GM12878 (cell line): ENCODE measurements at regions of chr7 and their contacts with region 1.

Region 1: GRCh38 chr7:149028346-149029109 is at the start of gene PDIA4:
- DNase-seq: peak; percentile 96
- ATAC-seq: peak; percentile 94
- H3K4me3 ChIP-seq: peak within 1 kb of the TSS; percentile 79
- H3K27ac ChIP-seq: peak within 1 kb of the TSS; percentile 84
- H3K4me1 ChIP-seq: no peaks in the 10 kb centered on the region
- H3K27me3 ChIP-seq: no peaks in the 10 kb centered on the region
- CTCF ChIP-seq: peak in 2 of 3 experiments; percentile 11 to 14; a peak in 2 of 6 replicates
- EP300 ChIP-seq: no peak
- POLR2A ChIP-seq: peak; percentile 86
- RAD21 ChIP-seq: no peak
- polyA plus RNA-seq, gene PDIA4: 7.1 to 13.4 TPM

Region 2: DNA sequence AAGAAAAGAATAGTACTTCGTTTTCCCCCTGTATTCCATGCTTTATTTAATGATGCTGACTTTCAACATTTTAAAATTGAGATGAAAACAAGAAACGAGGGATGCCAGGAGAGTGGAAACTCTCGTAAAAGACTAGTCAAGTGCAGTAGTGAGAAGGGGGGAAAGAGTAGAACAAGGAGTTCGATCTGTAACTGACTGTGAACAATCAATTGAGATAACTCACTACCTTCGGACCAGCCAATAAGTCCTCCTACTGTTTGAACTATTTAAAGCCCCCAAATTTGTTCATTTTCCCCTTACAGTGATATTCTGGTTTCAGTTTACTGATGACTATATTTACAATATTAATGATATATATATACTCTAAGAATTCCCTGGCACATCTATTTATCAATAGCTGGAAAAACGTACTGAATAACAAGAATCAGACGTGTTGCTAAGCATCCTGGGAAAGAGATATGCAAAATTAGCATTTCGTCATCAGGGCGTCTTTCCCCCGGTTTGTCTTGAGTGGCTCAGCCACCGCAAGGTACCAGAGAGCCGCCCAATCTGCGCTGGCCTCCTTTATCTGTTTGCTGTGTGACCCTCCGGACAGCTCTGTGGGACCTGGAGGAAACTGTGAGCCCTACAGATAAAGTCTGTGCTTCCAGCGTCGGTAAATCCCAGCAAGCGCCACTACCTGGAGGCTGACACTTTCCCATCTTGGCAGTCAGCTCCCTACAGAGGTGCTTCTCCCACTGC is 41.3 kb before region 1 on chr7:
- CTCF ChIA-PET with region 1: interaction called, 3 read pairs
- POLR2A ChIA-PET with region 1: interaction called, 12 read pairs
- RAD21 ChIA-PET with region 1: interaction called, 4 read pairs
- SMC1A ChIA-PET with region 1: no interaction called
- in situ Hi-C with region 1: no loop called
- intact Hi-C with region 1: no loop called
- DNase-seq: peak; percentile 78
- ATAC-seq: peak; percentile 96
- H3K4me3 ChIP-seq: peak overlapping the region; percentile 92
- H3K27ac ChIP-seq: peak overlapping the region; percentile 38
- H3K4me1 ChIP-seq: peaks cover 7% of the 10 kb centered on the region
- H3K27me3 ChIP-seq: no peaks in the 10 kb centered on the region
- CTCF ChIP-seq: no peak
- EP300 ChIP-seq: no peak
- POLR2A ChIP-seq: peak; percentile 55
- RAD21 ChIP-seq: no peak

Region 3: GRCh38 chr7:149005241-149006050 is 23.1 kb before region 1 on chr7:
- CTCF ChIA-PET with region 1: interaction called, 75 read pairs
- POLR2A ChIA-PET with region 1: interaction called, 3 read pairs
- RAD21 ChIA-PET with region 1: interaction called, 7 read pairs
- SMC1A ChIA-PET with region 1: interaction called, 7 read pairs
- in situ Hi-C with region 1: no loop called
- intact Hi-C with region 1: no loop called
- DNase-seq: no peak
- ATAC-seq: peak; percentile 99
- H3K4me3 ChIP-seq: no peak overlapping the region
- H3K27ac ChIP-seq: no peak overlapping the region
- H3K4me1 ChIP-seq: no peaks in the 10 kb centered on the region
- H3K27me3 ChIP-seq: no peaks in the 10 kb centered on the region
- CTCF ChIP-seq: peak; percentile 70 to 81 (median 77)
- EP300 ChIP-seq: no peak
- POLR2A ChIP-seq: no peak; the same call in 1 of the 2 replicates
- RAD21 ChIP-seq: peak; percentile 70

Region 4: GRCh38 chr7:149090397-149091195 is 62.1 kb after region 1 on chr7 and contains the start of gene ZNF786:
- CTCF ChIA-PET with region 1: no interaction called
- POLR2A ChIA-PET with region 1: no interaction called
- RAD21 ChIA-PET with region 1: no interaction called
- SMC1A ChIA-PET with region 1: interaction called, 3 read pairs
- in situ Hi-C with region 1: no loop called
- intact Hi-C with region 1: loop called (anchors 2 kb)
- DNase-seq: peak; percentile 48
- ATAC-seq: peak; percentile 94
- H3K4me3 ChIP-seq: peak within 1 kb of the TSS; percentile 93
- H3K27ac ChIP-seq: peak within 1 kb of the TSS; percentile 93
- H3K4me1 ChIP-seq: peaks cover 6% of the 10 kb centered on the region; the same call in 1 of the 2 replicates
- H3K27me3 ChIP-seq: no peaks in the 10 kb centered on the region
- CTCF ChIP-seq: peak; percentile 88 to 98 (median 91); a peak in 5 of 6 replicates
- EP300 ChIP-seq: 0 out of 4 replicates have a peak, but pooled peaks of 1 of the 2 experiments have one; percentile 9
- POLR2A ChIP-seq: peak; percentile 98
- RAD21 ChIP-seq: peak; percentile 90
- polyA plus RNA-seq, gene ZNF786: 0.47 to 0.86 TPM

Region 5: DNA sequence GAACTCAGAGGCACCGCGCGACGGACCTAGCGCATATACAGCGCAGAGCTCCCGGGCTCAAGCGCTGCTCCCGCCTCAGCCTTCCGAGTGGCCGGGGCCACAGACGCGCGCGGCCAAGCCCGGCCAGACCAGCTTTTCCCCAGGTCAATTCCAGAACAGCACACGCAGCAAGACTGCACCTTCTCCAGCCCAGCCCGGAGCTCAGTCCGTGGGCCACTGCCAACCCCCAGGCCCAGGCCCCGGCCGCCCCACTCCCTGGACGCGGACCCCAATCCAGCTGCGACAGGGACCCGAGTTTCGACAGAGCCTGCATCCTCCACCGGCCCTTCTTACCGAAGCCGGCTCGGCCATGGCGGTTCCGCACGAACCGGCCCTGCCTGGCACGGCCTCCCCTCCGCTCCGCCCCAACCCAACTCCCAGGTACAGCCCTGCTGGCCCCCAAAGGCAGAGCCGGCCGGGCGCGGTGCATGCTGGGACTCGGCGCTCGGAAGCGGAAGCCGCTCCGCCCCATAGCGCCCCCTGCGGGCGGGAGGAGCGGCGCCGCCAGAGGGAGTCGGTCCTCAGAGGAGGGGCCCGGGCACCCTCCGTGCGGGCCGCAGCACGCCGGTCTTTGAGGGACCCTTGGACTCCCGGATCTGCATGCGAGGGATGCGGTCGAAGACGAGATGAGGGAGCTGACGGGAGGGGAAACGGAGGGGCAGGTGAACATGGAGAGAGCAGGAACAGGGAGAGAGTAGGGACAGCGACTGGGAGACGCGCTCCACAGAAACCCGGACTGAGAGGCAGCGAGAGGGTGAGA is 97.5 kb after region 1 on chr7 and contains the start of gene ZNF425:
- CTCF ChIA-PET with region 1: no interaction called
- POLR2A ChIA-PET with region 1: no interaction called
- RAD21 ChIA-PET with region 1: no interaction called
- SMC1A ChIA-PET with region 1: no interaction called
- in situ Hi-C with region 1: no loop called
- intact Hi-C with region 1: loop called (anchors 5 kb)
- DNase-seq: peak; percentile 66
- ATAC-seq: peak; percentile 92
- H3K4me3 ChIP-seq: peak within 1 kb of the TSS; percentile 96
- H3K27ac ChIP-seq: peak within 1 kb of the TSS; percentile 90
- H3K4me1 ChIP-seq: no peaks in the 10 kb centered on the region
- H3K27me3 ChIP-seq: no peaks in the 10 kb centered on the region
- CTCF ChIP-seq: peak; percentile 87 to 96 (median 92)
- EP300 ChIP-seq: no peak
- POLR2A ChIP-seq: peak; percentile 99
- RAD21 ChIP-seq: peak; percentile 32; the same call in 1 of the 2 replicates
- polyA plus RNA-seq, gene ZNF425: 0.19 to 0.20 TPM